ENCODE measurements at regions of chr22 and their contacts with region 1.

Region 1: DNA sequence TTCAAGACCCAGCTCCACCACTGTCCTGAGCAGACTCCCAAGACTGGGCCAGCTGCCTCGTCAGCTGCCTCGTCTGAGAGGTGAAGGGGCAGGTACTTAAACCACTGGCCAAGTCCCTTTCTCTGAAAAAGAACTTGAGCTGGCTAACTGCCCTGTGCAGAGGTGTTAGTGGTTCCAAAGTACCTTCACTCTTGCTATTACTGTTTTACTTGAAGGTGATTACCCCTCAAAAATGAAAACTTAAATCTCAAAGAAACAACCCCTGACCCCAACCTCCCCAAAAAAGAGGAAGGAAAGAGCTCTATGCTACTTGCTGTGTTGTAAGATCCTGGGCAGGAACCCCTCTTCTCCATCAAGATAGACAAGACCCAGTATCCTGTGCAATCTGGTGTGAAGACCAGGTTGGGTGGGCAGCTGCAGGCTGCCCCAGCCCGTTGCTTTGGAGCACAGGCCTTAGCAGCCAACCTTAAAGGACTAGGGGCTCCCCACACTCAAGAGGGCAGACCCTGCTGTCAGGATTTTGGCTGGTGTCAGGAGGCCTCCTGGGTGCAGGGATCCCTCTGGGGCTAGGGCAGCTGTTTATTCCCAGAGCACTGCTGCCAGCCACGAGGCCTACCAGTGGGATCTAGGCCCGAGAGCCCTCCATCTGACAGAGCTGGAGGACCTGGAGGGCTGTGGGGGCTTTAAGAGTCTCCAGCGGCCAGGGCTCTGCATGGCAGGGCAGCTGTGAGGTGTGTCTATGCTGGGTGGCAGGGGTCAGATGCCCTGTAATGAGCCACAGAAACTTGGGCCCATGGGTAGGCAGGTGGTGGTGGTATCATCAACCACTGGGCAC is 13.0 kb downstream of the GUCD1 start:
- DNase-seq: no peak
- ATAC-seq: no peak
- H3K4me3 ChIP-seq: no peak overlapping the region
- H3K27ac ChIP-seq: peak overlapping the region; percentile 86 to 90 (median 89)
- H3K4me1 ChIP-seq: peaks cover 52 to 66% of the 10 kb centered on the region in 2 donors
- H3K27me3 ChIP-seq: no peaks in the 10 kb centered on the region
- CTCF ChIP-seq: no peak
- POLR2A ChIP-seq: no peak

Region 2: GRCh38 chr22:24564376-24565058 is 22.6 kb after region 1 on chr22:
- in situ Hi-C with region 1: no loop called
- intact Hi-C with region 1: loop called (anchors 2 kb)
- DNase-seq: peak; percentile 72 to 88
- ATAC-seq: peak; percentile 97 to 99
- H3K4me3 ChIP-seq: no peak overlapping the region
- H3K27ac ChIP-seq: peak overlapping the region; percentile 77 to 91 (median 88)
- H3K4me1 ChIP-seq: peaks cover 60 to 76% of the 10 kb centered on the region in 2 donors
- H3K27me3 ChIP-seq: no peaks in the 10 kb centered on the region
- CTCF ChIP-seq: no peak
- POLR2A ChIP-seq: no peak

Measured in gastrocnemius medialis (tissue), 4 donors.